Ovary (tissue), 10 donors: ENCODE measurements at regions of chr4 and their contacts with region 1.

Region 1: DNA sequence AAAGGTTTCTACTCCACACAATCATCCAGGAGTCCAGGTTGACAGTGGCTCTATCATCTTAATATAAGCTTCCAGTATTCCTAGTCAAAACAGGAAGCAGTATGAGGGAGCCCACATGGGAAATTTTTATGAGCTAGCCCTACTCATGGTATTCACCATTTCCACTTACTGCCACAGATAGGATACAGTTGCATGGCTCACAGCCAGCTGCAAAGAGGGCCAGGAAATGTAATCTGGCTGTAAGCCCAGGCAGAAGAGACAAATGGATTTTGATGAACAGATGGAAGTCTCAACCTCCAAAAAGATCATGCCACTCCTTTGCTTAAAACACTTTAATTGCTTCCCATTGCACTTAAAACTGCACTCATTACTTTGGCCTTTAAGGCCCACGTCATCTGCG is 150.6 kb downstream of the ADAMTS3 start:
- DNase-seq: peak; percentile 21 to 55 (median 49)
- H3K4me3 ChIP-seq: no peak overlapping the region
- H3K27ac ChIP-seq: no peak overlapping the region
- H3K4me1 ChIP-seq: no peaks in the 10 kb centered on the region
- H3K27me3 ChIP-seq: no peaks in the 10 kb centered on the region
- CTCF ChIP-seq: no peak
- EP300 ChIP-seq: no peak
- POLR2A ChIP-seq: no peak

Region 2: GRCh38 chr4:72375073-72375736 is 43.3 kb before region 1 on chr4:
- intact Hi-C with region 1: loop called in 1 of 4 experiments (anchors 1 kb)
- DNase-seq: no peak
- H3K4me3 ChIP-seq: no peak overlapping the region
- H3K27ac ChIP-seq: no peak overlapping the region
- H3K4me1 ChIP-seq: no peaks in the 10 kb centered on the region
- H3K27me3 ChIP-seq: peaks cover 2% of the 10 kb centered on the region
- CTCF ChIP-seq: no peak
- EP300 ChIP-seq: no peak
- POLR2A ChIP-seq: no peak

Region 3: GRCh38 chr4:72387959-72388358 is 30.5 kb before region 1 on chr4:
- intact Hi-C with region 1: no loop called
- DNase-seq: no peak
- H3K4me3 ChIP-seq: no peak overlapping the region
- H3K27ac ChIP-seq: no peak overlapping the region
- H3K4me1 ChIP-seq: no peaks in the 10 kb centered on the region
- H3K27me3 ChIP-seq: no peaks in the 10 kb centered on the region
- CTCF ChIP-seq: no peak
- EP300 ChIP-seq: no peak
- POLR2A ChIP-seq: no peak

Region 4: DNA sequence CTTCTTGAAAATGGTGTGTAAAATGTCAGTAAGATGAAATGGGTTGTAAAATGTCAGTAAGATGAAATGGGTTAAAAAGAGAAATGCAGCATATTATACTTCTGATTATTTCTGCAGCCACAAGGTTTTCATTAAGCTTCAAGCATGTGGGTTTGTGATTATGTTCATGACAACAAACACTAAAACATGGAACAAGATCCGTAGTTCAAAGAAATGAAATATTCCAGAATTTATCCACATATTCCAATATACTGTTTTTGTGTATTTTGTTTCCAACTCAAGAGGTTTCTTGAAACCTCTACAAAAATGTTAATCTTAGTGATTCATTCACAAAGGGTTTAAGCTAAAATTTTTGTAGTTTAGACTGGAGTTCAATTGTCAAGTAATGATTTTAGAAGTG is 66.5 kb after region 1 on chr4:
- intact Hi-C with region 1: no loop called
- DNase-seq: no peak
- H3K4me3 ChIP-seq: no peak overlapping the region
- H3K27ac ChIP-seq: no peak overlapping the region
- H3K4me1 ChIP-seq: no peaks in the 10 kb centered on the region
- H3K27me3 ChIP-seq: no peaks in the 10 kb centered on the region
- CTCF ChIP-seq: no peak
- EP300 ChIP-seq: no peak
- POLR2A ChIP-seq: no peak

Region 5: GRCh38 chr4:72690771-72691170 is 272.3 kb after region 1 on chr4:
- intact Hi-C with region 1: no loop called
- DNase-seq: no peak
- H3K4me3 ChIP-seq: no peak overlapping the region
- H3K27ac ChIP-seq: no peak overlapping the region
- H3K4me1 ChIP-seq: no peaks in the 10 kb centered on the region
- H3K27me3 ChIP-seq: no peaks in the 10 kb centered on the region
- CTCF ChIP-seq: no peak
- EP300 ChIP-seq: no peak
- POLR2A ChIP-seq: no peak